Cardiac septum (tissue), 1 donor: ENCODE measurements at regions of chr4 and their contacts with region 1.

Region 1: DNA sequence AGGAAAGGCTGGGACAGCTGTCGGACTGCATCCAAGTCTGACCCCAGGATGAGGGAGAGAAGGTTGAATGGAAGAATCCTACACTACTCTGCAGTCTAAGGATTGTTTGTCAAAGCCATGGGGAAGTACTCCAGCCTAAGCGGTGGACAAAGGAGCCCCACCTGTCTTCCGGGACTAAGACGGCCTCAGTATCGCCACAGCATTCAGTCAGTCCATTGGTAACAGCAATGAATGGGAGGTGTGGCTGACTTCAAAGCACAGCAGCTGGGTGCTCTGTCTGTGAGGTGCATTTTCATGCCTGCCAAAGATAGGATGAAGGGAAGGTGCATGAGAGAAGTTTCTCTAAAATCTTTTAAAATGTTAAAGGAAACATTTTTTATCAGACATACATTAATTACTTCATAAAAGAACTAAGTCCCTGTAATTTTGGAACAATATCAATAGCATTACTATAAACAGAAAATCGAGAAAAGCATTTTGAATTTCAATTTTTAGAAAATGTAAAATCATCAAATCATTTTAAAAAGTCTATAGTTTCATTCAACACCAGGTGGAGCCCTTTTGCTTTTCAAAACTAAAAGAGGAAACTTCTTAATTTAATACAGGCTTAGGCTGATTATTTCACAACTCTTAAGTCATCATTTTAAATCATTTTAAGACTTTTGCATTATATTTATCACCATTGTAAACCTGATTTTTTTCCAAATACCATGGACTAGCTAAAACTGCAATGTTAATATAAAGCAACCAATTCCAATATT is 27.6 kb upstream of the INTU start:
- DNase-seq: no peak

Region 2: GRCh38 chr4:127732613-127733328 is 127.6 kb after region 1 on chr4:
- intact Hi-C with region 1: loop called (anchors 2 kb)
- DNase-seq: no peak